MCF 10A (cell line): ENCODE measurements at regions of chr2 and their contacts with region 1.

Region 1: GRCh38 chr2:71226965-71227560 is at the start of gene PAIP2B:
- DNase-seq: peak; percentile 99
- H3K4me3 Mint-ChIP-seq: peak within 1 kb of the TSS; percentile 93
- H3K27ac Mint-ChIP-seq: peak within 1 kb of the TSS; percentile 63
- H3K4me1 Mint-ChIP-seq: peaks cover 12% of the 10 kb centered on the region
- H3K27me3 Mint-ChIP-seq: peaks cover 12% of the 10 kb centered on the region
- CTCF ChIP-seq: no peak
- total RNA-seq, gene PAIP2B: 1.4 and 1.8 TPM in 2 replicates

Region 2: DNA sequence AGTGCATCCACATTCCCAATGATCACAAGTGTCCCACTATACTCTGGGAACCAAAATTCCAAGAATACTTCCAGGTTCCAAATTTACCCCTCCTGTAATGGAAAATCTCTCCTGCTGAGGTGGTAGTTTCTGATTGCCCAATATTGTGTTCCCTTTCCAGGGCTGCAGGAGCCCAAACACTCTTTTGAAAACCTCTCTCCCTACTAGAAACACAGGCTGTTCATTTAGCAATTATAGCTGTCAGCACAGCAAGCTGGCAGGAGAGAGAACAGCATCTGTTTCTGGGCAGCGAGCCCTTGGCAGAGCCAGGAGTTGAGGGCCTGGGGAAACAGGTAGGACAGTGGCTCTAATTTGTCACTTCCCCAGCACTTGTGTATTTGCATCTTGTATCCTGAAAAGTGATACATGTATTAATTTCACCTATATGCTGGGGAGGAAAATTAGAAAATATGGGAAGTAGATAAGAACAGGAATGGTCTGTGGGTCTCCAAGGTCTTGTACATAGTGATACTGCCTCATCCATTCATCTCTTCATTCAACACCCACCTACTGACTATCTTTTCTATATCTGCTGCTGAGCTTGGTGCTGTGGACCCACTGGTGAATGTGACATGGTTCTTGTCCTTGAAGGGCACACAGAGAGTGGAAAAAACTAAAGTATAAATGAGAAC is 16.7 kb after region 1 on chr2:
- CTCF ChIA-PET with region 1: interaction called, 4 read pairs
- POLR2A ChIA-PET with region 1: interaction called, 15 read pairs
- intact Hi-C with region 1: no loop called
- DNase-seq: no peak
- H3K4me3 Mint-ChIP-seq: no peak overlapping the region
- H3K27ac Mint-ChIP-seq: no peak overlapping the region
- H3K4me1 Mint-ChIP-seq: no peaks in the 10 kb centered on the region
- H3K27me3 Mint-ChIP-seq: peaks cover 74% of the 10 kb centered on the region
- CTCF ChIP-seq: no peak

Region 3: GRCh38 chr2:71261534-71261933 is 34.5 kb after region 1 on chr2:
- CTCF ChIA-PET with region 1: interaction called, 10 read pairs
- POLR2A ChIA-PET with region 1: interaction called, 23 read pairs
- intact Hi-C with region 1: no loop called
- DNase-seq: peak; percentile 8
- H3K4me3 Mint-ChIP-seq: no peak overlapping the region
- H3K27ac Mint-ChIP-seq: no peak overlapping the region
- H3K4me1 Mint-ChIP-seq: no peaks in the 10 kb centered on the region
- H3K27me3 Mint-ChIP-seq: peaks cover 52% of the 10 kb centered on the region
- CTCF ChIP-seq: no peak

Region 4: GRCh38 chr2:71276311-71277146 is 49.5 kb after region 1 on chr2:
- CTCF ChIA-PET with region 1: interaction called, 53 read pairs
- POLR2A ChIA-PET with region 1: interaction called, 68 read pairs
- intact Hi-C with region 1: loop called (anchors 1 kb)
- DNase-seq: peak; percentile 91
- H3K4me3 Mint-ChIP-seq: peak overlapping the region; percentile 84
- H3K27ac Mint-ChIP-seq: no peak overlapping the region
- H3K4me1 Mint-ChIP-seq: peaks cover 16% of the 10 kb centered on the region
- H3K27me3 Mint-ChIP-seq: peaks cover 29% of the 10 kb centered on the region
- CTCF ChIP-seq: no peak

Region 5: GRCh38 chr2:71282495-71282894 is 55.4 kb after region 1 on chr2:
- CTCF ChIA-PET with region 1: interaction called, 53 read pairs
- POLR2A ChIA-PET with region 1: interaction called, 68 read pairs
- intact Hi-C with region 1: loop called (anchors 1 kb)
- DNase-seq: peak; percentile 34
- H3K4me3 Mint-ChIP-seq: no peak overlapping the region
- H3K27ac Mint-ChIP-seq: no peak overlapping the region
- H3K4me1 Mint-ChIP-seq: peaks cover 10% of the 10 kb centered on the region
- H3K27me3 Mint-ChIP-seq: no peaks in the 10 kb centered on the region
- CTCF ChIP-seq: peak; percentile 26

Region 6: DNA sequence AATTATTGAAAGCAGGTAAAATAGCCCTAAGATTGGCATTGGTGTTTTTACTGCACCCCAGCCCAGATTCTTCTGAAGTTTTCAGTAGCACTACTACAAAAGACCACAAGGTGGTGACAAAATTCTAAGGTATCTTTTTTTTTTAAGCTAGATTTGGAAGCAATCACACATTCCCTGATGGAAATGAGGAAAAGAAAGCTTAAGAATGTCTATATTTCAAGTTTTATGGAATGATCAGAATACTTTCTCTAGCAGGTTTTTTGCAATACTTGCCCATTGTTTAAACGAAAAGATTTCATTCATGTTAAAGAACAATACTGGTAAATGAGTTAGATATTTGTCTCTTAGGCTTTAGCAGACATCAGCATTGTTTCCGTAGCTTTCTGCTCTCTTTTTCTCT is 72.4 kb after region 1 on chr2:
- CTCF ChIA-PET with region 1: interaction called, 19 read pairs
- POLR2A ChIA-PET with region 1: interaction called, 7 read pairs
- intact Hi-C with region 1: no loop called
- DNase-seq: peak; percentile 51
- H3K4me3 Mint-ChIP-seq: no peak overlapping the region
- H3K27ac Mint-ChIP-seq: no peak overlapping the region
- H3K4me1 Mint-ChIP-seq: peaks cover 9% of the 10 kb centered on the region
- H3K27me3 Mint-ChIP-seq: no peaks in the 10 kb centered on the region
- CTCF ChIP-seq: peak; percentile 64